Head of caudate nucleus (tissue), 42 donors: ENCODE measurements at regions of chr5 and their contacts with region 1.

Region 1: DNA sequence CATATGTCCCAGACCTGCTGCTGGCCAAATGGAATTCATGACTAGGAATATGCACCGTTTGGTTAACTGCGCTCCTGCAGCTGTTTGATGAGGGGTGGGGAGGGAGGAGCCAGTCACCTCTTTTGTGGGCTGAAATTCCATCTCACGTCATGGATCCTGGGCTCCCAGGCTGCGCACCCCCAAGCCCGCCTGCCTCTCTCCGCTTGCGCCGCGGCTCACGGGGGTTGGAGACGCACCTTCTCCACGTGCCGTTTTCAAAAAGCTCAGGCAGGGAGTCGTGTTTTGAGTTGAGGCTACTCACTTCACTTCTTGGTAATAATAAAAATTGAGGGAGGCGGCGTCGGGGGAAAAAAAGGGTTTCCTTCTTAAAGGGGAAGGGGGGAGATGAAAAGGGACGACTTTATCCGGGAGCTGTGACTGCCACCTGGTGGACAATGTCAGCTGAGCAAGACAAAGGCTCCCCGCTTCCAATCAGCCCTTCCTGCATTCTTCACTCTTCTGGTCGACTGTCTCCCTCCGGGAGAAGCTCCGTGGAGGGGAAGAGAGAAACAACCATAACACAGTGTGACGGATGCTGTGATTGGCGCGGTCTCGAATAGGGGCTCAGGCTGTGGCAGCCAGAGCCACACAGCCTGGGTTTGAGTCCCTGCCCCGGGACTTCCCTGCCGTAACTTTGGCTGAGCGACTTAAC is 15.9 kb upstream of the C5orf47 start:
- DNase-seq: peak; percentile 74 to 97 (median 91)

Region 2: GRCh38 chr5:173615884-173616576 is 357.0 kb before region 1 on chr5:
- intact Hi-C with region 1: loop called (anchors 2 kb)
- DNase-seq: peak; percentile 38 to 89 (median 76)